ENCODE measurements at regions of chr3 and their contacts with region 1.

Region 1: DNA sequence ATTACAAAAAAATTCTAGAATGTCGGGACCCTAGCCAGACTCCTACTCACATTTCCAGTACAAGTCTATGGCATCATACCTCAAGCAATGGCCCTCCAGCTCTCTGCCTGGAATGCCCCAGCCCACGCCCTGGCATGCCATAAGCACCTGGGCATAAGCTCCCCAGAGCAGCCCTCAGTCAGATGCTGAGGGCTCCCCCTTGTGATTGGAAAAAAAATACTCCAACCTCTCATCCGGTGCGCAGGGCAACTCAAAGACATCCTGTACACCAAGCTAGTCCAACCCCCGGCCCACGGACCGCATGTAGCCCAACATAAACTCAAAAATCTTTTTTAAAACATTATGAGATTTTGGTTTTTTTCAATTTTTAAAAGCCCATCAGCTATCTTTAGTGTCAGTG is 115.4 kb downstream of the NEK10 start:
- ATAC-seq: peak in 4 of 8 experiments; percentile 54 to 84 (median 83)
- H3K4me3 ChIP-seq: no peak overlapping the region
- H3K27ac ChIP-seq: no peak overlapping the region
- H3K4me1 ChIP-seq: no peaks in the 10 kb centered on the region

Region 2: GRCh38 chr3:26989037-26989436 is 264.8 kb before region 1 on chr3:
- in situ Hi-C with region 1: no loop called
- ATAC-seq: no peak
- H3K4me3 ChIP-seq: no peak overlapping the region
- H3K27ac ChIP-seq: no peak overlapping the region
- H3K4me1 ChIP-seq: peaks cover 8 to 13% of the 10 kb centered on the region in 2 donors

Region 3: GRCh38 chr3:27134165-27134796 is 119.5 kb before region 1 on chr3:
- in situ Hi-C with region 1: loop called in 1 of 9 experiments (anchors 10 kb)
- ATAC-seq: peak; percentile 44 to 90 (median 70)
- H3K4me3 ChIP-seq: no peak overlapping the region
- H3K27ac ChIP-seq: no peak overlapping the region
- H3K4me1 ChIP-seq: no peaks in the 10 kb centered on the region

Region 4: GRCh38 chr3:27368831-27369607 is 115.2 kb after region 1 on chr3 and contains the start of gene NEK10:
- in situ Hi-C with region 1: no loop called
- ATAC-seq: peak; percentile 88 to 100 (median 99)
- H3K4me3 ChIP-seq: peak within 1 kb of the TSS; percentile 51 to 95 (median 64)
- H3K27ac ChIP-seq: peak within 1 kb of the TSS; percentile 1 to 31
- H3K4me1 ChIP-seq: peaks cover 0 to 4% of the 10 kb centered on the region in 2 donors
- total RNA-seq, gene NEK10: 1.5 to 18.8 (median 5.1) TPM